ENCODE measurements at regions of chr14 and their contacts with region 1.

Region 1: DNA sequence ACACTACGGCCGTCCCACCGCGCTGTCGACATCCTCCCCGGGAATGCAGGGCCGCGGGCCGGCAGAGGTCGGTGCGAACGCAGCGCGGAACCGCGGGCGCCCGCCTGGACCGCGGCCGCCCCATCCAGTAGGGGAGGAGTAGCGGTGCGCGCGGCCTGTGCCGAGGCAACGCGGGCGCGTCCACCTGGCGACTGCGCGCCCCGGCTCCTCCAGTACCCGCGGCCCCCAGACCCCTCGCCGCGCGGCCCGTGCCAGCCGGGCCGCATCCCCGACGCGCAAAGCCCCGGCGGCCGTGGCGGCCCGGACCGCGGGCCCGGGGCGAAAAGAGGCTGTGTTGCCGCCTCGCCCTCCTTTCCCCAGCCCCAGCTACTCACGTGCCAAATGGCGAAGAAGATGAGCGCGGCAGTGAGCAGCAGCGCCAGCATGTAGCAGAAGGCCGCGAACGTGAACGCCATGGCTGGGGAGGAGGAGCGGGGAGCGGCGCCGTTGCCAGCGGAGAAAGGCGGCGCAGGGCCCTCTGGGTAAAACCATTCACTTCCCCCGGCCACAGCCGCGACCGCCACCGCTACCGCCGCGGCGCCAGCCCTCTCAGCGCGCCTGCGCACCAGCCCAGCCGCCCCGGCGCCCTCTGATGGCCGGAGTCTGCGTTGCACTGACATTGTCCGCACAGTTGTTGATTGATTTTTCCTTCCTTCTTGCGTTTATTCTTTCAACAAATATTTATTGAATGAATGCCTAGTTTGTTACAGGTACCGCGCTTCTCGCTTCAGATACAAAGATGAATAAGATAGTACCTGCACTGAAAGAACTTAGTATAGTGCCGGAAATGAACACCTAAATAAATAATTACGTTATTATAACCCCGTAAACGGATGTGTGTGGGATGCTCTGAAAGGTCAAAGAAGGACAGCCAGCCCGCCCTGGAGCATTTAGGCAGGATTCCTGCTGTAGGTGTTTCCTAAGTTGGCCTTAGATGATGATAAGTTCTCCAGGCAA is at the start of gene CNIH1:
- DNase-seq: peak; percentile 92 to 96
- H3K4me3 ChIP-seq: peak within 1 kb of the TSS; percentile 91
- H3K4me3 Mint-ChIP-seq: peak within 1 kb of the TSS; percentile 83
- H3K27ac Mint-ChIP-seq: peak within 1 kb of the TSS; percentile 90
- H3K4me1 ChIP-seq: peaks cover 6% of the 10 kb centered on the region; the same call in 1 of the 2 replicates
- H3K4me1 Mint-ChIP-seq: peaks cover 7% of the 10 kb centered on the region
- H3K27me3 ChIP-seq: no peaks in the 10 kb centered on the region
- H3K27me3 Mint-ChIP-seq: no peaks in the 10 kb centered on the region
- CTCF ChIP-seq: peak; percentile 76 to 89
- total RNA-seq, gene CNIH1: 159 and 164 TPM in 2 replicates

Region 2: DNA sequence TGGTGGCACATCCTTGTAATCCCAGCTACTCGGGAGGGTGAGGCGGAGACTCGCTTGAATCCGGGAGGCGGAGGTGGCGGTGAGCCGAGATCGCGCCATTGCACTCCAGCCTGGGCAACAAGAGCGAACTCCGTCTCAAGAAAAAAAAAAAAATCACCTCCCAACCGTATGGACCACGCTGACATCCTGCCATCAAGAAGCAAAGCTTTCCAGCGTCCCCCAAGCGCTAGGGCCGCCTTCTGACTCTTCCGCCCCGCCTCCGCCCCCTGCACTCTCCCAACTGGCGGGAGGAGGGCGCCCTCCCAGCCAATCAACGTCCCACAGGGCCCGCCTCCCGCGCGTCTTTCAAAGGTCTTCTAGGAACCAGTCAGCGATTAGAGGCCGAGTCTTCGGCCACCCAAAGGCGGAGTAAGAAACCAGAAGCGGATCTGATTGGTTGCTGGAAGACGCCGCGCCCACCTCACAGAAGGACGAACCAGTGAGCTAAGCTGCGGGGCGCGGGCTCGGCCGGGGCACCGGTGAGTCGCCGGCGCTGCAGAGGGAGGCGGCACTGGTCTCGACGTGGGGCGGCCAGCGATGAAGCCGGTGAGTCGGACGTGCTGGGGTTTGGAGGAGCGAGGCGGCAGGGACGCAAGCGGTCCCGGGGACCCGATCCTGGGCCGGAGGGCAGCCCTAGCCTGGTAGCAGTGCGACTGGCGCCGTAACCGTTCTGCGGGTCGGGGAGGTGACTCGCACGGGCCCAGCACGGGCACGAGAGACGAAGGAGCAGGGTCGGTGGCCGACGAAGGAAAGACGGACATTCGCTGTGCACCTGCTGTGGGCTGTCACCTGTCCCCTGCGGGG is 44.5 kb before region 1 on chr14 and contains the start of gene CDKN3:
- CTCF ChIA-PET with region 1: no interaction called
- POLR2A ChIA-PET with region 1: no interaction called
- intact Hi-C with region 1: loop called (anchors 2 kb)
- DNase-seq: peak; percentile 98 to 99
- H3K4me3 ChIP-seq: peak within 1 kb of the TSS; percentile 72
- H3K4me3 Mint-ChIP-seq: peak within 1 kb of the TSS; percentile 82
- H3K27ac Mint-ChIP-seq: peak within 1 kb of the TSS; percentile 83
- H3K4me1 ChIP-seq: peaks cover 9% of the 10 kb centered on the region
- H3K4me1 Mint-ChIP-seq: peaks cover 15% of the 10 kb centered on the region
- H3K27me3 ChIP-seq: no peaks in the 10 kb centered on the region
- H3K27me3 Mint-ChIP-seq: no peaks in the 10 kb centered on the region
- CTCF ChIP-seq: peak; percentile 45 to 59
- total RNA-seq, gene CDKN3: 64.9 and 83.0 TPM in 2 replicates

Region 3: DNA sequence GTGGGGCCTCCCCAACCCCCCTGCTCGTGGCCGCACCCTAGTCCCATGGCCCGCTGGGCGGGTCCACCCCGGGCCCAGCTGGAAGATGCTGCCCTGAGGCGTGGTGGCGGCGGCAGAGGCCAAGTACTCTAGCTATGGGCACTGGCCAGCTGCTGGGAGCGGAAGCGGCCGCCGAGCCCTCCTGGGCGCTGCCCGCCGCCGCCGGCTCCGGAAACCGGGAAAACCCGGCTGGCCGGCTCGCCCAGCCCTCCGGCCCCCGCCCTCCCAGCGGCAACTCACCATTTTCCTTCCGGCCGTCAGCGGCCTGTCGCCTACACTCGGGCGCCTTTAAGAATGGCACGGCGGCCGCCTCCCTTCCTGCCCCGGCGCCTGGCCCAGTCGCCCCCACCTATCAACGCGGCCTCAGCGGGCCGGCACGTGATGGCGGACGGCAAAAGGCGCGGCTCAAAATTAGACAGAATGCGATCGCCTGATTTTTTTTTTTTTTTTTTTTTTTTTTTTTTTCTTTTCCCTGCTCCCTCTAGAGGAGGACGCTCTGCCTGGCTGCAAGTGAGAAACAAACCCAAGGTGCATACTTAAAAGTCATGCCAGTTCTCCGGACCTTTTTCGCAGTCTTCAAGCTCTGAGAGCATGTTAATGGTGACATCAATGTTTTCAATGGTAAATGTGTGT is 47.6 kb after region 1 on chr14 and contains the start of gene GMFB:
- CTCF ChIA-PET with region 1: no interaction called
- POLR2A ChIA-PET with region 1: no interaction called
- intact Hi-C with region 1: loop called (anchors 1 kb)
- DNase-seq: peak; percentile 92
- H3K4me3 ChIP-seq: peak within 1 kb of the TSS; percentile 86
- H3K4me3 Mint-ChIP-seq: peak within 1 kb of the TSS; percentile 74
- H3K27ac Mint-ChIP-seq: peak within 1 kb of the TSS; percentile 78
- H3K4me1 ChIP-seq: peaks cover 24% of the 10 kb centered on the region
- H3K4me1 Mint-ChIP-seq: peaks cover 18% of the 10 kb centered on the region
- H3K27me3 ChIP-seq: no peaks in the 10 kb centered on the region
- H3K27me3 Mint-ChIP-seq: no peaks in the 10 kb centered on the region
- CTCF ChIP-seq: peak in 1 of 2 experiments; percentile 57
- total RNA-seq, gene GMFB: 65.5 and 67.4 TPM in 2 replicates

Region 4: GRCh38 chr14:54805521-54806322 is 364.6 kb after region 1 on chr14:
- CTCF ChIA-PET with region 1: no interaction called
- POLR2A ChIA-PET with region 1: no interaction called
- intact Hi-C with region 1: loop called (anchors 5 kb)
- DNase-seq: peak; percentile 75 to 85
- H3K4me3 ChIP-seq: no peak overlapping the region
- H3K4me3 Mint-ChIP-seq: no peak overlapping the region
- H3K27ac Mint-ChIP-seq: no peak overlapping the region
- H3K4me1 ChIP-seq: 0 out of 2 replicates have a peak, but pooled peaks cover 3% of the 10 kb centered on the region
- H3K4me1 Mint-ChIP-seq: no peaks in the 10 kb centered on the region
- H3K27me3 ChIP-seq: peaks cover 1% of the 10 kb centered on the region; the same call in 1 of the 2 replicates
- H3K27me3 Mint-ChIP-seq: no peaks in the 10 kb centered on the region
- CTCF ChIP-seq: peak; percentile 87 to 96